ENCODE measurements at regions of chr3 and their contacts with region 1.

Region 1: DNA sequence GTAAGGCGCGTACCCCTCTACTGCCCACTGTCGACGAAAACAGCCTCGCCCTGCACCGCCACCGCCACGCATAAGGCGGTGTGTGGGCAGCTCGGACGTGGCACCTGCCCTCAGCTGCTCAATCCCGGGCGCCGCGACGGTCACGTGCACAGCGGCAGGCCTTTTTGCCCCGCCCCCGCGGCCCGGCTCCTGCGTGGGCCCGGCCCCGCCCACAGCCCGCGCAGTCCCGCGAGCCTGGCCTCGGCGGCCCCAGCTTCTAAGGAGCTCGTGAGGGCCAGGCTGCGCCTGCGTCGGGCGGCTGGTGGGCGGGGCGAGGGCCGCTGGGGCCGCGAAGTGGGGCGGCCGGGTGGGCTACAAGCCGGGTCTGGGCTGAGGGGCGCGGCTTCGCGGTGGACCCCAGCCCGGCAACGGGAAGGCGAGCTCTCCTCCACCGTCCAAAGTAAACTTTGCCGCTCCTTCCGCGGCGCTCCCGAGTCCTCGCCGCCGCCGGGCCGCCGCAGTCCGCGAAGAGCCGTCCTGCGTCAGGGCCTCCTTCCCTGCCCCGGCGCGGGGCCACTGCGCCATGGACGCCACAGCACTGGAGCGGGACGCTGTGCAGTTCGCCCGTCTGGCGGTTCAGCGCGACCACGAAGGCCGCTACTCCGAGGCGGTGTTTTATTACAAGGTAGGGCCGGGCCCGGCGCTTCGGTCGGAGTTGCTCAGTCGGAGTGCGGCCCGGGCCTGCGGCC is at the start of gene CAPN7:
- DNase-seq: peak; percentile 84 to 99 (median 94)
- ATAC-seq: peak; percentile 89
- H3K4me3 ChIP-seq: peak within 1 kb of the TSS; percentile 84
- H3K4me3 Mint-ChIP-seq: peak within 1 kb of the TSS; percentile 92
- H3K27ac ChIP-seq: peak within 1 kb of the TSS; percentile 69 to 86
- H3K27ac Mint-ChIP-seq: peak within 1 kb of the TSS; percentile 93
- H3K4me1 ChIP-seq: peaks cover 21% of the 10 kb centered on the region
- H3K4me1 Mint-ChIP-seq: peaks cover 43% of the 10 kb centered on the region
- H3K27me3 ChIP-seq: no peaks in the 10 kb centered on the region
- H3K27me3 Mint-ChIP-seq: no peaks in the 10 kb centered on the region
- CTCF ChIP-seq: no peak
- total RNA-seq, gene CAPN7: 64.7 to 69.4 TPM

Region 2: GRCh38 chr3:14814488-14814887 is 391.6 kb before region 1 on chr3:
- CTCF ChIA-PET with region 1: no interaction called
- POLR2A ChIA-PET with region 1: no interaction called
- intact Hi-C with region 1: no loop called
- DNase-seq: no peak
- ATAC-seq: no peak
- H3K4me3 ChIP-seq: no peak overlapping the region
- H3K4me3 Mint-ChIP-seq: no peak overlapping the region
- H3K27ac ChIP-seq: no peak overlapping the region
- H3K27ac Mint-ChIP-seq: no peak overlapping the region
- H3K4me1 ChIP-seq: peaks cover 5% of the 10 kb centered on the region
- H3K4me1 Mint-ChIP-seq: peaks cover 5% of the 10 kb centered on the region
- H3K27me3 ChIP-seq: peaks cover 31 to 41% of the 10 kb centered on the region in 2 experiments
- H3K27me3 Mint-ChIP-seq: peaks cover 72% of the 10 kb centered on the region
- CTCF ChIP-seq: no peak

Region 3: GRCh38 chr3:14947886-14948555 is 258.1 kb before region 1 on chr3:
- CTCF ChIA-PET with region 1: no interaction called
- POLR2A ChIA-PET with region 1: interaction called, 8 read pairs
- intact Hi-C with region 1: loop called in 1 of 2 experiments (anchors 5 kb)
- DNase-seq: peak; percentile 93 to 97 (median 95)
- ATAC-seq: peak; percentile 90
- H3K4me3 ChIP-seq: peak overlapping the region; percentile 96
- H3K4me3 Mint-ChIP-seq: peak overlapping the region; percentile 98
- H3K27ac ChIP-seq: peak overlapping the region; percentile 98 to 99
- H3K27ac Mint-ChIP-seq: peak overlapping the region; percentile 98
- H3K4me1 ChIP-seq: peaks cover 30% of the 10 kb centered on the region
- H3K4me1 Mint-ChIP-seq: peaks cover 66% of the 10 kb centered on the region
- H3K27me3 ChIP-seq: no peaks in the 10 kb centered on the region
- H3K27me3 Mint-ChIP-seq: no peaks in the 10 kb centered on the region
- CTCF ChIP-seq: no peak

Region 4: DNA sequence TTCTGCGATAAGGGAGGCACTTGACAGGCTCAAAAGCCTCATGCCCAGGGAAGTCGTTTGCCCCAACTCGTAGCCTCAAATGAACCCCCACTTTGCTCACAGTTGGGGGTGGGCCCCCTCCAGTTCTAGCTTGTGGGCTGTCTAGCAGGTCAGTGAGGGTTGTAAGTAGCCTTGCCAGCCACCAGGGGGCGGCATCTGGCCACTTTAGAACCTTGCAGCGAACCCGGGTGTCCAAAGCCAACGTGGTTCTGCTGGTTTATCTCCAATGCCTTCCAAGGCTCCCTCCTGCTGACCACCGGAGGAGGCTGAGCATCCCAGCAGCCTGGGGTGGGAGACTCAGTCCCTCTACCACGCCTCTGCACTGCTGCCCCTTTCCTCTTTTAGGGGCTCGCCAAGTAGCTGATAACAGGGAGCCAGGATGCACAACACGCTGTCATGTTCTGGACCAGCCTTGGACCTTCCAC is 98.0 kb before region 1 on chr3:
- CTCF ChIA-PET with region 1: interaction called, 3 read pairs
- POLR2A ChIA-PET with region 1: no interaction called
- intact Hi-C with region 1: loop called in 1 of 2 experiments (anchors 5 kb)
- DNase-seq: peak; percentile 55 to 88 (median 65)
- ATAC-seq: peak; percentile 98
- H3K4me3 ChIP-seq: no peak overlapping the region
- H3K4me3 Mint-ChIP-seq: no peak overlapping the region
- H3K27ac ChIP-seq: no peak overlapping the region
- H3K27ac Mint-ChIP-seq: no peak overlapping the region
- H3K4me1 ChIP-seq: peaks cover 7% of the 10 kb centered on the region
- H3K4me1 Mint-ChIP-seq: peaks cover 9% of the 10 kb centered on the region
- H3K27me3 ChIP-seq: no peaks in the 10 kb centered on the region
- H3K27me3 Mint-ChIP-seq: peaks cover 5% of the 10 kb centered on the region
- CTCF ChIP-seq: peak; percentile 87

Region 5: GRCh38 chr3:15332405-15333098 is 126.5 kb after region 1 on chr3 and contains the start of gene SH3BP5:
- CTCF ChIA-PET with region 1: interaction called, 10 read pairs
- POLR2A ChIA-PET with region 1: interaction called, 6 read pairs
- intact Hi-C with region 1: loop called in 1 of 2 experiments (anchors 5 kb)
- DNase-seq: peak; percentile 45 to 90 (median 70)
- ATAC-seq: peak; percentile 90
- H3K4me3 ChIP-seq: peak within 1 kb of the TSS; percentile 99
- H3K4me3 Mint-ChIP-seq: peak within 1 kb of the TSS; percentile 97
- H3K27ac ChIP-seq: peak within 1 kb of the TSS; percentile 45 to 60
- H3K27ac Mint-ChIP-seq: peak within 1 kb of the TSS; percentile 79
- H3K4me1 ChIP-seq: peaks cover 48% of the 10 kb centered on the region
- H3K4me1 Mint-ChIP-seq: peaks cover 58% of the 10 kb centered on the region
- H3K27me3 ChIP-seq: no peaks in the 10 kb centered on the region
- H3K27me3 Mint-ChIP-seq: no peaks in the 10 kb centered on the region
- CTCF ChIP-seq: peak; percentile 68
- total RNA-seq, gene SH3BP5: 16.8 to 17.7 TPM

Region 6: DNA sequence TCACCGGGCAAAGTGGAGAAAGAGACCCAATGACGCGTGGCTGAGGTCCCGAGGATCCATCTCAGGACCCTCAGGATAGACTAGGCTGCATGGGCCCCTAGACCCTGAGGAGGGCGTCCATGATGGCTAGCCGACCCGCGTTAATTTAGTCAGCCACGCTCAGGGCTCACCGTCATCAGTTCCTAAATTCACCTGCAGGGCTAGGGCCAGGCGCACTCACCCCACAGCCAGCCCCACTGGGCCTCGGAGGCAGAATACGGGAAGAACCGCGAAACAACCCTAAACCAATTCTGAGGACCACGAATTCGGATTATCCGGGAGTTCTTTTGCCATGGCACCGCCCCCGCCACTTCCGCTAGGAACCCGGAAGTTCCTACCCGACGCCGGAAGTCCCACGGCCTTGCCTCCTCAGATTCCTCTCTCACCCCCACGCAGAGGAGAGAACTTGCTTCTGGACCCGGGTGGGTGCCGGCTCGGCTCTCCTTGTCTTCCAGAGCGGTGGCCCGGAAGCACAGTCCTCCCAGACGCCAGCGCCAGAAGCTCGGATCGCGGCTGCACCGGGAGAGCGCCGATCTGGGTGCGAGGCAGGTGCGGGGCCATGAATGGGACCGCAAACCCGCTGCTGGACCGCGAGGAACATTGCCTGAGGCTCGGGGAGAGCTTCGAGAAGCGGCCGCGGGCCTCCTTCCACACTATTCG is 221.2 kb after region 1 on chr3 and contains the starts of genes EAF1 and METTL6:
- CTCF ChIA-PET with region 1: no interaction called
- POLR2A ChIA-PET with region 1: interaction called, 4 read pairs
- intact Hi-C with region 1: loop called in 1 of 2 experiments (anchors 5 kb)
- DNase-seq: peak; percentile 71 to 91 (median 80)
- ATAC-seq: peak; percentile 84
- H3K4me3 ChIP-seq: peak within 1 kb of the TSS; percentile 72
- H3K4me3 Mint-ChIP-seq: peak within 1 kb of the TSS; percentile 93
- H3K27ac ChIP-seq: peak within 1 kb of the TSS; percentile 58 to 80
- H3K27ac Mint-ChIP-seq: peak within 1 kb of the TSS; percentile 81
- H3K4me1 ChIP-seq: peaks cover 33% of the 10 kb centered on the region
- H3K4me1 Mint-ChIP-seq: peaks cover 74% of the 10 kb centered on the region
- H3K27me3 ChIP-seq: no peaks in the 10 kb centered on the region
- H3K27me3 Mint-ChIP-seq: no peaks in the 10 kb centered on the region
- CTCF ChIP-seq: peak; percentile 19
- total RNA-seq, gene EAF1: 31.7 to 34.9 TPM
- total RNA-seq, gene METTL6: 4.7 to 5.7 TPM

Region 7: DNA sequence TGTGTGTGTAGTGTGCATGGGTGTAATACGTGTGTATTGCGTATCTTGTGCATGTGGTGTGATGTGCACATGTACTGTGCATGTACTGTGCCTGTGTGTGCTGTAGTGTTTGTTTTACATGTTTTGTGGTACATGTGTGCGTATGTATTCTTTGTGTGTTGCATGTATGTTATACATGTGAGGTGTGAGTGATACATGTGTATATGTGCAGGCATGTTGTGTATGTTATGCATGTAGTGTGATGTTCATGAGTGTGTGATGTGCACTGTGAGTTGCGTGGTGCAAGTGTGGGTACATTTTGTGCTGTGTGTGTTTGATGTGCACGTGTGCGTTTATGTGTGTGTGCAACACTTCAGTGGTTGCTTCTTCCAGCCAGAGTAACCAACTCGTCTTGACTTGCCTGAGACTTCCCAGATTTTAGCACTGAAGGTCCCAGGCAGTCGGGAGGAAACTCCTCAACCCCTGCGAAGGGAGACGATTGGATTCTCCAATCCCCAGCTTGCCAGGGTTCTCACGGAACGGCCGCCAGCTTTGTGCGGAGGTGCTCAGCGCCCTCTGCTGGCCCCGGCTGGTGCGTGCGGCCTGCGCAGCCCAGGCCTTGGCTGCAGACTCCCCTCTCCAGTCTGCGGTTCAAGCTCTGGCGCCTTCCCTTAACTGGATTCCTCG is 972.0 kb after region 1 on chr3:
- CTCF ChIA-PET with region 1: interaction called, 3 read pairs
- POLR2A ChIA-PET with region 1: no interaction called
- intact Hi-C with region 1: loop called in 1 of 2 experiments (anchors 5 kb)
- DNase-seq: peak; percentile 24 to 75 (median 48)
- ATAC-seq: peak; percentile 68
- H3K4me3 ChIP-seq: no peak overlapping the region
- H3K4me3 Mint-ChIP-seq: no peak overlapping the region
- H3K27ac ChIP-seq: no peak overlapping the region
- H3K27ac Mint-ChIP-seq: no peak overlapping the region
- H3K4me1 ChIP-seq: peaks cover 7% of the 10 kb centered on the region
- H3K4me1 Mint-ChIP-seq: no peaks in the 10 kb centered on the region
- H3K27me3 ChIP-seq: peaks cover 0 to 2% of the 10 kb centered on the region in 2 experiments
- H3K27me3 Mint-ChIP-seq: peaks cover 22% of the 10 kb centered on the region
- CTCF ChIP-seq: peak; percentile 80